ENCODE measurements at regions of chr16 and their contacts with region 1.

Region 1: GRCh38 chr16:81632392-81633146 is 146.5 kb upstream of the PLCG2 start:
- DNase-seq: peak; percentile 69
- H3K4me3 Mint-ChIP-seq: peak overlapping the region; percentile 68
- H3K27ac Mint-ChIP-seq: peak overlapping the region; percentile 100
- H3K4me1 Mint-ChIP-seq: peaks cover 72% of the 10 kb centered on the region
- H3K27me3 Mint-ChIP-seq: no peaks in the 10 kb centered on the region

Region 2: GRCh38 chr16:80997139-80997798 is 635.3 kb before region 1 on chr16:
- intact Hi-C with region 1: loop called (anchors 10 kb)
- DNase-seq: no peak
- H3K4me3 Mint-ChIP-seq: peak overlapping the region; percentile 81
- H3K27ac Mint-ChIP-seq: peak overlapping the region; percentile 93
- H3K4me1 Mint-ChIP-seq: peaks cover 81% of the 10 kb centered on the region
- H3K27me3 Mint-ChIP-seq: no peaks in the 10 kb centered on the region

Region 3: GRCh38 chr16:81567987-81568748 is 64.4 kb before region 1 on chr16:
- intact Hi-C with region 1: loop called (anchors 1 kb)
- DNase-seq: no peak
- H3K4me3 Mint-ChIP-seq: peak overlapping the region; percentile 22
- H3K27ac Mint-ChIP-seq: peak overlapping the region; percentile 94
- H3K4me1 Mint-ChIP-seq: peaks cover 34% of the 10 kb centered on the region
- H3K27me3 Mint-ChIP-seq: no peaks in the 10 kb centered on the region

Region 4: DNA sequence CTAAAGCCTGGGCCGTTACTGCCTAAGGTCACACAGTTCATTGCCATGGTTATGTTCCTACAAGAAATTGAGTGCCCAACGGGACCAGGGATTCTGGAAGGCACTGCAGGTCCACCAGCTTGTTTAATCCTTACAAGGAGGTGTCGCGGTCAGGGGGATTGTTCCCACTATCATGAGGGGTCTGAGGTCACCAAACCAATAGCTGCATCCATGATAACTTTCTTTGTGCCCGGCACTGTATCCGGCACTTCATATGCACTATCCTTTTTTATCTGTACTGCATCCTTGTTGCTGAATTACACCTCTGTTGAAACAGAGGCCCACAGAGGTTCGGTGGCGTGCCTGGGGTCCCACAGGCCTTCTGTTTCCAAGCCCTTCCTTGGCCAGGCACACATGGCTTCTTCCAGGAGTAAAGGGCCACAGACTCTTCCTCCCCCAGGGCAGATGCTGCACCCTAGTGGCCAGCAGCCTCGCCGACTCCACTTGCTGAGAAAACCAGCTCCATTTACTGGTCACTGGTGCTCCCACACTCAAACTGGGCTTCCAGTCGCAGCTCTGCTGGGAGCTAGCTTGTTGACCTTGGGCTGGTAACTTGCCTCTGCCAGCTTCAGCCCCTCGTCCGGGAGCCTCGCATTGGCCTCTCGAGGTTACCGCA is 64.5 kb after region 1 on chr16:
- intact Hi-C with region 1: loop called (anchors 2 kb)
- DNase-seq: peak; percentile 37
- H3K4me3 Mint-ChIP-seq: no peak overlapping the region
- H3K27ac Mint-ChIP-seq: peak overlapping the region; percentile 63
- H3K4me1 Mint-ChIP-seq: peaks cover 13% of the 10 kb centered on the region
- H3K27me3 Mint-ChIP-seq: no peaks in the 10 kb centered on the region

Region 5: GRCh38 chr16:82055728-82056549 is 423.4 kb after region 1 on chr16:
- intact Hi-C with region 1: no loop called
- DNase-seq: no peak
- H3K4me3 Mint-ChIP-seq: no peak overlapping the region
- H3K27ac Mint-ChIP-seq: no peak overlapping the region
- H3K4me1 Mint-ChIP-seq: peaks cover 4% of the 10 kb centered on the region
- H3K27me3 Mint-ChIP-seq: peaks cover 26% of the 10 kb centered on the region

Region 6: GRCh38 chr16:82653550-82654511 is 1021.3 kb after region 1 on chr16:
- intact Hi-C with region 1: loop called (anchors 2 kb)
- DNase-seq: peak; percentile 57
- H3K4me3 Mint-ChIP-seq: peak overlapping the region; percentile 55
- H3K27ac Mint-ChIP-seq: peak overlapping the region; percentile 93
- H3K4me1 Mint-ChIP-seq: peaks cover 82% of the 10 kb centered on the region
- H3K27me3 Mint-ChIP-seq: peaks cover 4% of the 10 kb centered on the region

Measured in activated T-helper 2 cell treated with anti-CD3 and anti-CD28 coated beads, Interferon-gamma antibody, Interleukin-2, Interleukin-4, amounts not matched to agents 10 μg/mL and 5 μg/mL and 100 μg/mL, durations not matched to agents 14 hours and 24 hours and 36 hours (primary cell).